ENCODE measurements at regions of chr16 and their contacts with region 1.

Region 1: DNA sequence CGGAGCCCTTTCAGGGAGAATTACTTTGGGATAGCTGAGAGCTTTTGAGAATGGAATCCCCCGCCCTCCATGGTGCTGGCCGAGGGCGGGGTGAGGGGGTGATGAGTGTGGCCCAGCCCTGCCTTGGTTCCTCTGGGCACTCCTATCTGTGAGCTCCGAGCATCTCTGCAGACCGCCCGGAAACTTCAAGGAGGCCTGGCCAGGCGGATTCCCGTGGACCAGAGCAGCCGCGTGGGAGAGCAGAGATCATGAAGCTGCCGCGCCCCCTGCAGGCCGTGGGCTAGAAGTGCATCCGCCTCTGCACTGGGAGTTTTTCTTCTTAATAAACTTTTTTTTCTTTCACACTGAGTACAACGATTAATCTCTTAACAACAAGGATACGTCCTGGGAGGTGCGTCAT is 392.9 kb upstream of the EEF2KMT start:
- DNase-seq: no peak
- H3K4me3 Mint-ChIP-seq: no peak overlapping the region
- H3K27ac Mint-ChIP-seq: no peak overlapping the region
- H3K4me1 Mint-ChIP-seq: no peaks in the 10 kb centered on the region
- H3K27me3 Mint-ChIP-seq: no peaks in the 10 kb centered on the region

Region 2: DNA sequence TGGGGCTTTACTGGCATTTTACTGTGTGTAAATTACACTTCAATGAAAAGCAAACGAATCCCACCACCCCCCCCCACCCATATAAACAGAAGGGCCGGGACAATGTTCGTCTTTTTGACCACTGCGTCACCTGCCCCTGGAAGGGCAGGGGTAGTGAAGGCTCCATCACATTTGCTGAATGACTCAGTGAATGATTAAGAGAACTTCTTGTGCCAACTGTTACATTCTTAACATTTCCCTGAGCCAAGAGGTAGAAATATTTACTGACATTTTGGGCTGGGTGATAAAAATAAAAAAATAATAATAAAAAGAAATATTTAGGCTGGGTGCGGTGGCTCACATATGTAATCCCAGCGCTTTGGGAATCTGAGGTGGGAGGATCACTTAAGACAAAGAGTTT is 910.3 kb before region 1 on chr16:
- intact Hi-C with region 1: no loop called
- DNase-seq: no peak
- H3K4me3 Mint-ChIP-seq: no peak overlapping the region
- H3K27ac Mint-ChIP-seq: no peak overlapping the region
- H3K4me1 Mint-ChIP-seq: no peaks in the 10 kb centered on the region
- H3K27me3 Mint-ChIP-seq: no peaks in the 10 kb centered on the region

Region 3: GRCh38 chr16:5234295-5235050 is 256.0 kb before region 1 on chr16:
- intact Hi-C with region 1: loop called (anchors 5 kb)
- DNase-seq: no peak
- H3K4me3 Mint-ChIP-seq: no peak overlapping the region
- H3K27ac Mint-ChIP-seq: no peak overlapping the region
- H3K4me1 Mint-ChIP-seq: peaks cover 9% of the 10 kb centered on the region
- H3K27me3 Mint-ChIP-seq: peaks cover 3% of the 10 kb centered on the region

Region 4: DNA sequence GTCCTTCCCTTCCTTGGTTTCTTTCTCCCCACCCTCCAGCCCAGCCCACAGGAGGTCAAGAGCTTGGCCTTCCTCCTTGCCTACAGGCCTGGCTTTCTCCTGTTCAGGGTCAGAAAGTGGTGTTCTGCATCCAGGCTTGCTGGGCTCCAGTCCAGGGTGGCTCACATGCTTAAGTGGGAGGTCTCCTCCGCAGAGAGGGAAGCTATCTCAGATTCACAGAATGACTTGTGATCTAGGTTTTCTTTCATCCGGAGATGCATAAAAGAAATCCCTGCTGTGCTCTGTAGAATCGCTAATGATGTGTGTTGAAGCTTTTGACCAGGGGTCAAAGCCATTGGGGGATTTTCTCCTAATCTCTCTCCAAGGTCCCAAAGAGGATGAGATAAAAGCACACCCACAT is 10.6 kb before region 1 on chr16:
- intact Hi-C with region 1: no loop called
- DNase-seq: no peak
- H3K4me3 Mint-ChIP-seq: no peak overlapping the region
- H3K27ac Mint-ChIP-seq: no peak overlapping the region
- H3K4me1 Mint-ChIP-seq: no peaks in the 10 kb centered on the region
- H3K27me3 Mint-ChIP-seq: no peaks in the 10 kb centered on the region

Region 5: GRCh38 chr16:5918567-5919127 is 428.1 kb after region 1 on chr16:
- intact Hi-C with region 1: no loop called
- DNase-seq: no peak
- H3K4me3 Mint-ChIP-seq: no peak overlapping the region
- H3K27ac Mint-ChIP-seq: no peak overlapping the region
- H3K4me1 Mint-ChIP-seq: no peaks in the 10 kb centered on the region
- H3K27me3 Mint-ChIP-seq: no peaks in the 10 kb centered on the region